Activated naive CD4-positive, alpha-beta T cell treated with anti-CD3 and anti-CD28 coated beads for 36 hours (primary cell): ENCODE measurements at regions of chr2 and their contacts with region 1.

Region 1: GRCh38 chr2:61538200-61538919 is at the start of gene XPO1:
- DNase-seq: peak; percentile 100
- H3K4me3 Mint-ChIP-seq: peak within 1 kb of the TSS; percentile 90
- H3K27ac Mint-ChIP-seq: peak within 1 kb of the TSS; percentile 97
- H3K4me1 Mint-ChIP-seq: peaks cover 27% of the 10 kb centered on the region
- H3K27me3 Mint-ChIP-seq: no peaks in the 10 kb centered on the region
- total RNA-seq, gene XPO1: 201 to 203 TPM

Region 2: GRCh38 chr2:60756191-60757041 is 781.9 kb before region 1 on chr2 and contains the start of gene PAPOLG:
- CTCF ChIA-PET with region 1: no interaction called
- intact Hi-C with region 1: loop called (anchors 1 kb)
- DNase-seq: peak; percentile 99
- H3K4me3 Mint-ChIP-seq: peak within 1 kb of the TSS; percentile 99
- H3K27ac Mint-ChIP-seq: peak within 1 kb of the TSS; percentile 97
- H3K4me1 Mint-ChIP-seq: peaks cover 40% of the 10 kb centered on the region
- H3K27me3 Mint-ChIP-seq: no peaks in the 10 kb centered on the region
- total RNA-seq, gene PAPOLG: 14.1 to 16.1 TPM

Region 3: DNA sequence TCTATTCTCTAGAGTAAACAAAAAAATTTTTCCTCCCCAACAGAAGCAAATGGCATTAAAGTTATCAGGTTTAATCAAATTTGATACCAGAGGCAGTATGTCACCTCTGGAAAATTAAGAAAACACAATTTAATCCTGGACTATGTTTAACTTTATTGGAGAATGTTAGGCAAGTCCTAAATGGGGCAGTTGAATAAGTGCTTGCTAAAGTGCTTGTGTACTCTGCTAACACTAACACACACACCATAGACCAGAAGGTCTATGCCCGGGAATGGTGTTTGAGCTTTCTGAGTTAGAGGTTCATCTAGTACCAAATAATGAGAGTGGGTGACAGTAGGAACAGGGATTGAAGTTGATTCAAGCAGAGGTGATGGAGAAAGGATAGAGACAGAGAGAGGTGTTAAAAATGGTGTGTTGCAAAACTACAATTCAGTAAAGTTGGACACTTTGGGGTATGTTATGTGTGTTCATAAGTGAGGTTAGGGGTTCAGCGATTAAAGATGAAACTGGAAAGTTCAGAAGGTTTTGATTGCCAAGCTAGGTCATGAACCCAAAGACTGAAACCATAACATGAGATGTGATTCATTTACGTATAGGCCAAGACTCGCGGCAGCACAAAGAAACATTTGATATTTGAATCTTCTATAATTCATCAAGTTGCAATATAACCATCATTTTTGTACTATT is 561.3 kb before region 1 on chr2:
- CTCF ChIA-PET with region 1: no interaction called
- intact Hi-C with region 1: loop called (anchors 2 kb)
- DNase-seq: peak; percentile 48
- H3K4me3 Mint-ChIP-seq: no peak overlapping the region
- H3K27ac Mint-ChIP-seq: peak overlapping the region; percentile 69
- H3K4me1 Mint-ChIP-seq: peaks cover 53% of the 10 kb centered on the region
- H3K27me3 Mint-ChIP-seq: no peaks in the 10 kb centered on the region

Region 4: GRCh38 chr2:61176755-61177726 is 361.3 kb before region 1 on chr2:
- CTCF ChIA-PET with region 1: no interaction called
- intact Hi-C with region 1: loop called (anchors 1 kb)
- DNase-seq: peak; percentile 94
- H3K4me3 Mint-ChIP-seq: peak overlapping the region; percentile 78
- H3K27ac Mint-ChIP-seq: peak overlapping the region; percentile 79
- H3K4me1 Mint-ChIP-seq: peaks cover 48% of the 10 kb centered on the region
- H3K27me3 Mint-ChIP-seq: no peaks in the 10 kb centered on the region

Region 5: DNA sequence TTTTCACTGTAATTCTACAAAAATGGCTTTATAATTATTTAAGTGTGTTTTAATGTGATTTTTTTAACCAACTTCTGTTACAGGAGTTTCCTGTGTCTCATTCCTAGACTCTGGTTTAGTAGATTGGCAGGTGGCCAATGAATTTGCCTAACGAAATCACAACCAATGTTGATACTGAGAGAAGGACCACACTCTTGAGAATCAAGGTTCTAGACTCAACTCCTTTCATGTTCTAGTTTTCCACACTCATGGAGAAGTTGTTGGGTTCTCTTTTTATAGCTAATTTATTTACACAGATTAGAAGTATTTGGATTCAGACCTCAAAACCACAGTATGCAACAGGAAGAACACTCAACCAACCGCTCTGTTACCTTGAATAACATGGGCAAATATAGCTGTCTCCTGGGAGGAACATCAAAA is 44.8 kb before region 1 on chr2:
- CTCF ChIA-PET with region 1: interaction called, 4 read pairs
- intact Hi-C with region 1: loop called (anchors 2 kb)
- DNase-seq: peak; percentile 54
- H3K4me3 Mint-ChIP-seq: no peak overlapping the region
- H3K27ac Mint-ChIP-seq: peak overlapping the region; percentile 79
- H3K4me1 Mint-ChIP-seq: peaks cover 25% of the 10 kb centered on the region
- H3K27me3 Mint-ChIP-seq: no peaks in the 10 kb centered on the region

Region 6: GRCh38 chr2:61549546-61549945 is 11.2 kb after region 1 on chr2:
- CTCF ChIA-PET with region 1: no interaction called
- intact Hi-C with region 1: no loop called
- DNase-seq: no peak
- H3K4me3 Mint-ChIP-seq: no peak overlapping the region
- H3K27ac Mint-ChIP-seq: no peak overlapping the region
- H3K4me1 Mint-ChIP-seq: no peaks in the 10 kb centered on the region
- H3K27me3 Mint-ChIP-seq: no peaks in the 10 kb centered on the region

Region 7: DNA sequence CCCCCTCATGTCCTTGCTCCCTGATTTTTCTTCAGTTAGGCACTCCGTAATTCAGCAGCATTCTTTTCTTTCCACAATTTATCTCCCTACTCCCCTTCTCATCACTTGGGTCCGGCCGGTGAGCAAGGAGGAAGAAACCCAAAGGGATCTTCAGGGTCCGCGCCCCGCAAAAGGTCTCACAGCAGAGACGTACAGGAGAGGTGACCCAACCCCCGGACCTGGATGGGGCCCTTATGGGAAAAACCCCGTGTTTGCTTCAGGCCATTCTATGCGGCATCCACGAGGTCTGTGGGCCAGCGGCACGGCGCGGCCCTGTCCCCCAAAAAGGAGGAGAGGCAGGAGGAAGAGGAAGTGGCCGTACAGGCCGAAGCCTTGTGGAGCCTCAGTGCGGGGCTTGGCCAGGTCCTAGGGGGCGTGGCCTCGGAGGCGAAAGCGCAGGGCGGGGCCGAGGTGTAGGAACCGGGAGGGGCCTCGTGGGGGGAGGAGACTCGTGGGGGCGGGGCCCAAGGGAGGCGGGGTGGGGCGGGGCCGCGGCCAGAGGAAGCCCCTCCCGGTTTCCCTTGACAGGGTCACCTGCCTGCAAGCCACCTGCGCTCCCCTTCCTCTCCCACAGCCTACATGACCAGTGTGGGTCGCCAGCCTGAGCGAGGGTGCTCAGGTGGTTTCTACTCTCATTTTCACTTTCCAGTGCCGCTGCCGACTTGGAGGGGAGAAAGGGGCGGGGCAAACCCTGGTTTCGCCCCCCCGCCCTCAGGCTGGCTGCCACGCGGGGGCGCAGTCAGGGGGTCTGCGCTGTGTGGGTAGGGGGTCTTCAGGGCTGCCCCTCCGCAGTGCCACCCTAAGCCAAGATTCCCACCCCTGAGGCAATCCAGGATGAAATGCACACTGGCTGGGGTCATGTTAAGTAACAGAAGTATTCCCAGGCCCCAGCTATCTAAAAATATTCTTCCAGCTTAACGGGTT is 156.2 kb after region 1 on chr2:
- CTCF ChIA-PET with region 1: no interaction called
- intact Hi-C with region 1: loop called (anchors 1 kb)
- DNase-seq: peak; percentile 88
- H3K4me3 Mint-ChIP-seq: peak overlapping the region; percentile 86
- H3K27ac Mint-ChIP-seq: peak overlapping the region; percentile 59
- H3K4me1 Mint-ChIP-seq: peaks cover 11% of the 10 kb centered on the region
- H3K27me3 Mint-ChIP-seq: no peaks in the 10 kb centered on the region

Region 8: GRCh38 chr2:61905372-61906185 is 367.2 kb after region 1 on chr2 and contains the start of gene COMMD1:
- CTCF ChIA-PET with region 1: no interaction called
- intact Hi-C with region 1: loop called (anchors 5 kb)
- DNase-seq: peak; percentile 92
- H3K4me3 Mint-ChIP-seq: peak within 1 kb of the TSS; percentile 96
- H3K27ac Mint-ChIP-seq: peak within 1 kb of the TSS; percentile 63
- H3K4me1 Mint-ChIP-seq: peaks cover 25% of the 10 kb centered on the region
- H3K27me3 Mint-ChIP-seq: no peaks in the 10 kb centered on the region
- total RNA-seq, gene COMMD1: 26.9 to 29.5 TPM